Activated CD4-positive, alpha-beta T cell treated with anti-CD3 and anti-CD28 coated beads for 36 hours (primary cell): ENCODE measurements at regions of chr2 and their contacts with region 1.

Region 1: DNA sequence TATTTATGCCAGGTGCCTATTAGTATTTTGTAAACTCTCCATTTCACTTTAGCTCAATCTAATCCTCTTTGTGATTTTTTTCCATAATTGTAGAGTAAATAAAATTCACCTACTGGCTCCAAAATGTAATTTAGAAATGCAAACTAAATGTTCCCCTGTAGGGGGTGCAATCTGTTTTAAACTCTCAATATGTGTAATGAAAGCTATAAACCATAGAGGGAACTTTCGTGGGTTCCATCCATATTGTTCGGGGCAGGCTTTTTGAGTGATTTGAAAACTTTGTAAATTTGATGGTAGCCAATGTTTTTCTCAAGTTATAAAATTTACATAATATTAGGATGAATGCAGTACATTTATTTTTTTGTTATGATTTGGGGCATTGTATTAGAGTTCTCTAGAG is 49.4 kb downstream of the TSPYL6 start:
- DNase-seq: no peak
- ATAC-seq: no peak
- H3K4me3 Mint-ChIP-seq: no peak overlapping the region
- H3K27ac Mint-ChIP-seq: no peak overlapping the region
- H3K4me1 Mint-ChIP-seq: peaks cover 4% of the 10 kb centered on the region
- H3K27me3 Mint-ChIP-seq: no peaks in the 10 kb centered on the region

Region 2: DNA sequence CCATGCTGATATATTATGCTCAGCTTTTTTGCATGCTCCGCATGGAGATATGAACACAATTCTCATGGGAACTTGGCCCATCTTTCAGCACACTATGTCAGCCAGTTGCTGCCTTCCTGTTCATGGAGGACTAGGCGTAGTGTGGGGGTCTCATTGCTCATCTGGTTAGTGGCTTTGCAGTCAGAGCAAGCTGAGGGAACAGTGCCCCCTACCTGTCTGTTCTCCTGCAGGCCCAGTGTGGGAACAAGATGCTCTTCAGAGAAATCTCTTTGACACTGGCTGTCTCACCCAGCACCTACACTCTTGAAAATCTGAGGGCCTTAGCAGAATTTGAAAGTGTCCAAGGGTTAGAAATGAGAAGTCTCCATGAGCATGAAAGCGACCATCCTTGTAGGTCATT is 296.6 kb after region 1 on chr2:
- CTCF ChIA-PET with region 1: no interaction called
- POLR2A ChIA-PET with region 1: no interaction called
- intact Hi-C with region 1: loop called in 1 of 2 experiments (anchors 2 kb)
- DNase-seq: peak; percentile 64
- ATAC-seq: peak; percentile 49
- H3K4me3 Mint-ChIP-seq: no peak overlapping the region
- H3K27ac Mint-ChIP-seq: no peak overlapping the region
- H3K4me1 Mint-ChIP-seq: no peaks in the 10 kb centered on the region
- H3K27me3 Mint-ChIP-seq: no peaks in the 10 kb centered on the region